ENCODE measurements at regions of chrX and their contacts with region 1.

Region 1: DNA sequence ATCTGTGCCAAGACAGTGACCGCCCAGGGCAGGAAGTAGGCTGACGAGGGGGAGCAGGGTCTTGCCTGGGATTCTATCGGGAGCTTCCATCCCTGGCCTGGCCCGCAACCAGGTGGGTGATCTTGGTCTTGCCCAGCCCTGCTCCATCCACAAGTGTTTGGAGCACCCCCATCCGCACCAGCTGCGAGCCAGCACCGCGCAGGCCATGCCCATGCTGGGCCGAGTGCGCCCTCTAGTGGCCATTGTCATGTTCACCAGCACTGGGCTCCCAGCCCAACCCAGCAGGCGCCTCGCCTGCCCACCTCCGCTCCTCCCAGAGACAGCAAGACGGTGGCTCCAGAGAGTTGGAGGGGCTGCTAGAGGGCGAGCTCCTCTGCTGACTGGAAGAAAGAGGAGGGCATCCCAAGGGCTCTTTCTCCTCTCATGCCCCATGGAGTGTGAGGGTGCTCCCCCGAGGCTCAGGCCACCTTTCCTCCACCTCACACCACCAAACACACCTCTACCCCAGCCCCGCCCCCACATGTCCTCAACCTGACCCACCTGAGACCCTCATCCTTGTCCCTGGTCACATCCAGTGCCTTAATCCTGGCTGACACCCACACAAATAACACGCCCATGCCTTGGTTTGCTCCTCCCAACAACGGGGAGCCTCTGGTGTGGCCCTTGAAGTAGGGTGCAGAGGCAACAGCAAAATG is 9.8 kb upstream of the ATP2B3 start:
- DNase-seq: peak; percentile 80
- H3K4me3 ChIP-seq: no peak overlapping the region
- H3K27ac ChIP-seq: no peak overlapping the region
- H3K4me1 ChIP-seq: no peaks in the 10 kb centered on the region
- H3K27me3 ChIP-seq: no peaks in the 10 kb centered on the region
- CTCF ChIP-seq: peak; percentile 80

Region 2: DNA sequence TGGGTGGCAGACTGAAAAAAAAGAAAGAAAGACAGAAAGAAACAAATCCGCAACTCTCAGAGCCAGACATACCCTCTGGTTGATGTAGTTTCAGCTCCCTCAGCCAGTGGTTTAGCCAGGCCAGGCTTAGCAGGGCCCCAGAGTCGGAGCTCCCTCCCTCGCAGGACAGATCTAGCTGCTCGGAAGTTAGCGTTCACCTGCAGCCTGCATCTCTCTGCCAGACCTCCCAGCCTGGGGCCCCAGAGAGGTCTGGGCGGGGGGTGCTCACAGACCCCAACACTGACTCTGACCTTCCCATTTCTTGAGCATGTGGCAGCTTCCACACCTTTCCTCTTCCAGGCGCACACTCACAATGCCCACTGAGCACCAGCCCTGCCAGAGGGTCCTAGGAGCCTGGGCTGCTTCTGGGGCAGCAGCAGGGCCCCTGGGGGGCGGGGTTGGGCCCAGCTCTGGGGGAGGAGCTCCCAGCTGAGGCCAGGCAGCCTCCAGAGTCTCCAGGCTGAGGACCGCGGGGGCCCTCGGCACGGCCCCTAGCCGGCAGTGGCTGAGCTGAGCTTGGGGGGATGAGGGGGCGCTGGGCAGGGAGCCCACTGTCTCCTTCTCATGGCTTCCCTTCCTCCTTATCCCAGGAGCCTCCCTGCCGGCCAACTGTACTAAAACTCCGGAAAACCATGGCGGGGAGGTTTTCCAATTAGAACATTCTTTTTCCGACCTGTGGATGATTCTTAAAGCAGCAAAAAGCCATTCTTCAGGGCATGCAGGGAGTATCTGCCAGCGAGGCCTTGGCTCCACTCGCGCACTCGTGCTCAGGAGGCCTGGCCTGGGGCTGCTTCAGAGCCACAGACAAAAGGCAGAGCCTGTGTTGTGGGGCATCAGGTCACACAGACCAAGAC is 614.4 kb before region 1 on chrX:
- intact Hi-C with region 1: no loop called
- DNase-seq: no peak
- H3K4me3 ChIP-seq: no peak overlapping the region
- H3K27ac ChIP-seq: no peak overlapping the region
- H3K4me1 ChIP-seq: no peaks in the 10 kb centered on the region
- H3K27me3 ChIP-seq: no peaks in the 10 kb centered on the region
- CTCF ChIP-seq: no peak

Region 3: GRCh38 chrX:152946681-152947080 is 561.0 kb before region 1 on chrX:
- intact Hi-C with region 1: loop called (anchors 5 kb)
- DNase-seq: no peak
- H3K4me3 ChIP-seq: no peak overlapping the region
- H3K27ac ChIP-seq: no peak overlapping the region
- H3K4me1 ChIP-seq: no peaks in the 10 kb centered on the region
- H3K27me3 ChIP-seq: no peaks in the 10 kb centered on the region
- CTCF ChIP-seq: no peak